Breast epithelium (tissue), 4 donors: ENCODE measurements at regions of chr6 and their contacts with region 1.

Region 1: DNA sequence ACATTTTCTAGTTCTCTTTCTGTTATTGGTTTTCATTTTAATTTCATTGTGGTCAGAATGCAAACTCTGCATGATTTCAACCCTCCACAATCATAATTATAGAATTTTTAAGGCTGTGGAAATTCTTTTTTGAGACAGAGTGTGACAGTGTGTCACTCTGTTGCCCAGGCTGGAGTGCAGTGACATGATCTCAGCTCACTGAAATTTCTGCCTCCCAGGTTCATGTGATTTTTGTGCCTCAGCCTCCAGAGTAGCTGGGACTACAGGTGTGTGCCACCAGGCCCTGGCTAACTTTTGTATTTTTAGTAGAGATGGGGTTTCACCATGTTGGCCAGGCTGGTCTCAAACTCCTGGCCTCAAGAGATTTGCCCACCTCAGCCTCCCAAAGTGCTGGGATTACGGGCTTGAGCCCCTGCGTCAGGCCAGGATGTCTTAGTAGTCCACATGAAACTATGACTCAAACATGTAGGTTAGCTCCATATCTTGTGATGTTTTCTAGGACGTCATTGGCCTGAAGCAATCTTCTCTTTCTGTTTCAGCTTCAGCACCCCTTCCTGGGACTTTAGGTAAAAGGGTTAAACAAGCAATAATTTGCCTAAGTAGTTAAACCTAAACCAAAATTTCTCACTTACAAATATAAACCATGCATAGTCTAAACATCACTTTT is 47.4 kb upstream of the SAMD3 start:
- DNase-seq: no peak
- H3K4me3 ChIP-seq: no peak overlapping the region
- H3K27ac ChIP-seq: no peak overlapping the region
- H3K4me1 ChIP-seq: no peaks in the 10 kb centered on the region
- H3K27me3 ChIP-seq: no peaks in the 10 kb centered on the region
- CTCF ChIP-seq: no peak
- POLR2A ChIP-seq: no peak

Region 2: DNA sequence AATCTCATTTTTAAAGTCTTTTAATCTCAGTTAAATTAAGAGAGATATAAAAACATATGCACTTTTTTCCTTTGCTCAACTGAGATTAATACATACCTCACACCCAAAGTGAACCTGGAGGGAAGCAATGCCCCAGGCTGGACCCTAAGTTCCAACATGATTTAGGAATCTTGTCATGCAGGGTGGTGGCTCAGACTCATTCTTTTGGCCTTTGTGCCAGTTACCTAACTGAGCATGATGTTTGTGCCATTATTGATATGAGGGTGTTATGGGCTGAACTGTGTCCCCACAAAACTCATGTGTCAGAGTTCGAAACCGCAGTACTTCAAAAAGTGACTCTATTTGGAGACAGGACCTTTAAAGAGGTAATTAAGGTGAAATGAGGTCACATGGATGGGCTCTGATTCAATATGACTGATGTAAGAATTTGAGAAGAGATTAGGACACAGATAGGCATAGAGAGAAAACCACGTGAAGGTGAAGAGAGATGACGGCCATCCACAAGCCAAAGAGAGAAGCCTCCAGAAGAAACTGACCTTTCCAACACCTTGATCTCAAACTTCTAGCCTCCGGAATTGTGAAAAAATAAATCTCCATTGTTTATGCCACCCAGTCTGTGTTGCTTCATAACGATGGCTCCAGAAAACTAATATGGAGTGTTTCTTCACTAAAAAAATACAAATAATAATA is 748.0 kb before region 1 on chr6:
- intact Hi-C with region 1: loop called (anchors 5 kb)
- DNase-seq: no peak
- H3K4me3 ChIP-seq: no peak overlapping the region
- H3K27ac ChIP-seq: no peak overlapping the region
- H3K4me1 ChIP-seq: no peaks in the 10 kb centered on the region
- H3K27me3 ChIP-seq: no peaks in the 10 kb centered on the region
- CTCF ChIP-seq: no peak
- POLR2A ChIP-seq: no peak

Region 3: GRCh38 chr6:130240232-130240631 is 29.9 kb before region 1 on chr6:
- intact Hi-C with region 1: no loop called
- DNase-seq: no peak
- H3K4me3 ChIP-seq: no peak overlapping the region
- H3K27ac ChIP-seq: no peak overlapping the region
- H3K4me1 ChIP-seq: no peaks in the 10 kb centered on the region
- H3K27me3 ChIP-seq: no peaks in the 10 kb centered on the region
- CTCF ChIP-seq: no peak
- POLR2A ChIP-seq: no peak

Region 4: DNA sequence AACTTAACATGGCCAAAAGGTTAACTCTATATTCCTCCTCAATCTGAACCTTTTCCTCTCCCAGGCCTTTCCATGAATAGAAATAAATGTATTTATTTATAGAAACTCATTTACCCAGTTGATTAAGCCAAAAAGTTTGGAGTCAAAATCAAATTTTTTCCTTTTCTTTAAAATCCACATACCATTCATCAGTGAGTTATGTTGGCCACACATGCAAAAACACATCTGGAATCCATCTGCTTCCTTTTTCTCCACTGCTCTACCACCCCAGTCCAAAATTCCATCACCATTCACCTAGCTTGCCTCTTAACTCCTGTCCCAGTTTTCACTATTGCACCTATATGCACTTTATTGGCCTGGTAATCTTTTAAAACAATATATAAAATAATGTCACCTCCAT is 33.3 kb after region 1 on chr6:
- intact Hi-C with region 1: no loop called
- DNase-seq: no peak
- H3K4me3 ChIP-seq: no peak overlapping the region
- H3K27ac ChIP-seq: no peak overlapping the region
- H3K4me1 ChIP-seq: no peaks in the 10 kb centered on the region
- H3K27me3 ChIP-seq: no peaks in the 10 kb centered on the region
- CTCF ChIP-seq: no peak
- POLR2A ChIP-seq: no peak